ENCODE measurements at regions of chr4 and their contacts with region 1.

Region 1: GRCh38 chr4:74364652-74365491 is at the start of gene EREG:
- DNase-seq: peak; percentile 51
- H3K4me3 ChIP-seq: peak within 1 kb of the TSS; percentile 65 to 91 (median 81)
- H3K27ac ChIP-seq: peak within 1 kb of the TSS; percentile 83
- H3K4me1 ChIP-seq: peaks cover 10% of the 10 kb centered on the region
- H3K27me3 ChIP-seq: no peaks in the 10 kb centered on the region
- CTCF ChIP-seq: no peak
- total RNA-seq, gene EREG: 9.5 to 44.0 TPM

Region 2: GRCh38 chr4:74353858-74354257 is 11.0 kb before region 1 on chr4:
- CTCF ChIA-PET with region 1: interaction called, 36 read pairs
- dilution Hi-C with region 1: no loop called
- in situ Hi-C with region 1: no loop called
- intact Hi-C with region 1: no loop called
- DNase-seq: no peak
- H3K4me3 ChIP-seq: no peak overlapping the region
- H3K27ac ChIP-seq: no peak overlapping the region
- H3K4me1 ChIP-seq: peaks cover 6% of the 10 kb centered on the region
- H3K27me3 ChIP-seq: no peaks in the 10 kb centered on the region
- CTCF ChIP-seq: no peak